ENCODE measurements at regions of chr2 and their contacts with region 1.

Region 1: GRCh38 chr2:174248187-174248997 is at the start of gene OLA1:
- DNase-seq: peak; percentile 95 to 98
- H3K4me3 ChIP-seq: peak within 1 kb of the TSS; percentile 84
- H3K4me1 ChIP-seq: peaks cover 14% of the 10 kb centered on the region
- H3K27me3 ChIP-seq: no peaks in the 10 kb centered on the region

Region 2: DNA sequence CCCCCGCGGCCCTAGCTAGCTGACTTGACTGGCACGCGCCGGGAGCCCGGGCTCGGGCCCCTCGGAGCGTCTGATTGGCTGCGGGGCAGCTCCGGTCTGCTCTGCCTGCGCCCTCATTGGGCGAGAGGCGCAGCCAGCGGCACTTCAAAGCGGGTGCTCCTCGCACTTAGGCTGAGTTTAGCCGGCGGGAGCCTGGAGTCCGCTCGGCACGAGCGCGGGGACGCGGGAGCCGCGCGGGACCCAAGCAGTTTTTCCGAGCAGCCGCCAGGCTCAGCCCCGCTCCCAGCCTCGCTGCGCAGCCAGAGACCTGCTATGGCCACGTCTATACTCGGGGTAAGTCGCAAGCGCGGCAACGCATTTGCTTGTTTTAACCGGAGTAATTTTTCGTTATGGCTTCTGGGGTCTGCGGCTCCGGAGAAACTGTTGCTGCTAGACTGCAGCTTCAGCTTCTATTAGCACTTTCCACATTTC is 86.4 kb after region 1 on chr2 and contains the start of gene SP9:
- in situ Hi-C with region 1: loop called (anchors 5 kb)
- DNase-seq: no peak
- H3K4me3 ChIP-seq: no peak within 1 kb of the TSS
- H3K4me1 ChIP-seq: peaks cover 28% of the 10 kb centered on the region
- H3K27me3 ChIP-seq: peaks cover 16% of the 10 kb centered on the region; the same call in 1 of the 2 replicates

Measured in HAP-1 (cell line).